ENCODE measurements at regions of chrX and their contacts with region 1.

Region 1: DNA sequence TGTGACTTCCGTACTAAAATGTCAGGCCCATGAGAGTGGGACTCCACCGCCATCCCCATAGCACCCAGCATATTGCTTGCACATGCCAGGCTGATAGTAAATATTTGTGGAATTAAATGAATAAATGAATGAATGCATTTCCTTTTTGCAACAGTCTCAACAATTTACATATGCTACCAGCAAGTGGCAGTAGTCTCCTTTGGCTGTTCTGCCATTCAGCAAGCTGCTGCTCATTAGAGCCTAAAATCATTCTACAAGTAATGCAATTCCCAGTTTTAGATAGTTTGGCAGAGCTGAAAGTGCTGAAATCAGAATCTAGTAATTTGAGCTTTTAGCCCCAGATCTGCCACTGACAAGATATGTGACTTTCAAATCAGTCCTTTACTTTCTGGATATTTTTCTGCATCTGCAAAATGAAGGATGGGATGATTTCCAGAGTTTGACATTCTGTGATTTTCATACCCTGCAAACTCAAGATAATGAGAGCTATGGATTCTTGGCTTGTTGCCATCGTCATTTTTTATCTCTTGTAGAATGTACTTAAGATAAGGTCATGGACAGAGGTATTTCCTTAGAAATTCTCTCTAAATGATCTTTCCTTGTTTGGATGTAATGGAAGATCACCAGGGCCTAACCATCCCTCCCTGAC is 35.7 kb upstream of the INTS6L start:
- DNase-seq: no peak
- ATAC-seq: no peak
- H3K4me3 ChIP-seq: no peak overlapping the region
- H3K27ac ChIP-seq: no peak overlapping the region
- H3K4me1 ChIP-seq: no peaks in the 10 kb centered on the region
- H3K27me3 ChIP-seq: no peaks in the 10 kb centered on the region

Region 2: DNA sequence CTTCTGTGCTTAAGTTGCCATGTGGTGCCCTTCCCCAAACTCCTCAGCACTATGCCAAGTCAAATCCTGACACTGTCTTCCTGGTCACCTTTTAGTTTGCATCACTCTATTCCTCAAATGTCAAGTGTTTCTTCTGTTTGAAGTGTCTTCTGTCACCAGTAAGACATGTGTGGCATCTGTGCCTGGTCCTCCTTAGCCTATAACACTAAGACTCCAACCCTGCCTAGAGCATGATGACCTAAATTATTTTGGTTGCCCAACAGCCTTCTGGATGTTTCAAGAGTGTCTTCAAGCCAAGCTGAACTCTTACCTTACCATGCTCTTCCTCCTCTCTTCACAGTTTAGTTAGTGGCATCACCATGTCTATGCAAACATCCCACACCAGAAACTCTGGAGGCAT is 80.6 kb after region 1 on chrX:
- intact Hi-C with region 1: loop called in 1 of 4 experiments (anchors 10 kb)
- DNase-seq: no peak
- ATAC-seq: no peak
- H3K4me3 ChIP-seq: no peak overlapping the region
- H3K27ac ChIP-seq: no peak overlapping the region
- H3K4me1 ChIP-seq: no peaks in the 10 kb centered on the region
- H3K27me3 ChIP-seq: no peaks in the 10 kb centered on the region

Region 3: DNA sequence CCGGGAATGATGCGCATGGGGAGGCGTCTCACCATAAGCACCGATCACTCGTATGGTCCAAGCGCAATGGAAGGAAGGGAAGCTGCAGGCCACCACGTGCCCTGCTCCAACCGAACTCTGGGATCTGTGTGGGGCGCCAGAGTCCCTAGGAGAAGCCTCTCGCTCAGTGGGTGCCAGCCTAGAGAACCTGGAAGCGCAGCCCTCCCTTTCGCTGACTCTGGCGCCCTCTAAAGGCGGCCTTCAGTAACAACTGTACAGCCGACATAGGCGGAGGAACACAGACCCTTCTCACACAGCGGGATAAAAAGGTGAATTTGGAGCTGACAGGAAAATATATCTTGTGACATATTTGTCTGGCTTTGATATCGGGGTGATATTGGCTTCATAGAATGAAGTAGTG is 111.7 kb after region 1 on chrX:
- intact Hi-C with region 1: loop called in 1 of 4 experiments (anchors 10 kb)
- DNase-seq: peak; percentile 22 to 59 (median 47)
- ATAC-seq: peak in 1 of 2 donors; percentile 39
- H3K4me3 ChIP-seq: no peak overlapping the region
- H3K27ac ChIP-seq: no peak overlapping the region
- H3K4me1 ChIP-seq: no peaks in the 10 kb centered on the region
- H3K27me3 ChIP-seq: no peaks in the 10 kb centered on the region